CD4-positive, alpha-beta memory T cell (primary cell): ENCODE measurements at regions of chr1 and their contacts with region 1.

Region 1: GRCh38 chr1:62841587-62842169 is 57.7 kb downstream of the ATG4C start:
- DNase-seq: peak in 4 of 5 donors; percentile 32 to 48 (median 44)
- H3K4me3 ChIP-seq: no peak overlapping the region
- H3K4me3 Mint-ChIP-seq: no peak overlapping the region
- H3K27ac ChIP-seq: no peak overlapping the region
- H3K27ac Mint-ChIP-seq: no peak overlapping the region
- H3K4me1 ChIP-seq: no peaks in the 10 kb centered on the region
- H3K4me1 Mint-ChIP-seq: peaks cover 0 to 1% (median 0%) of the 10 kb centered on the region in 4 donors
- H3K27me3 ChIP-seq: no peaks in the 10 kb centered on the region
- H3K27me3 Mint-ChIP-seq: no peaks in the 10 kb centered on the region

Region 2: DNA sequence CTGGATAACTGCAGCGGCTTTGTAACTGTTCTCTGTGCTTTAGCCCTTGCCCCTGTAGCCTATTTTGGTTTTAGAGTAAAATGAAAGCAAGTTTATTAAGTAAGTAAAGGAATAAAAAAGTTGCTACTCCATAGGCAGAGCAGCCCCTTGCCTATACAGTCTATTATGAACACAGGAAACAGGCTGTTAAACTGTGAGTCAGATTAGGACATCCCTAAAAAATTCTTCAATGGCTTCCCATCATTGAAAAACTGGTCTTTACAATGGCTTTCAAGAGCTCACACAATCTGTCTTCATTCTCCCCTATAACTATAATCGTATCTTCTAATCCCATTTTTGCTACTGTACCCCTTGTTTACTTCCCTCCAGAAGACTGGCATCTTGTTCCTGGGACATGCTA is 14.8 kb before region 1 on chr1:
- CTCF ChIA-PET with region 1: interaction called, 22 read pairs
- POLR2A ChIA-PET with region 1: no interaction called
- intact Hi-C with region 1: no loop called
- DNase-seq: no peak
- H3K4me3 ChIP-seq: no peak overlapping the region
- H3K4me3 Mint-ChIP-seq: no peak overlapping the region
- H3K27ac ChIP-seq: no peak overlapping the region
- H3K27ac Mint-ChIP-seq: no peak overlapping the region
- H3K4me1 ChIP-seq: no peaks in the 10 kb centered on the region
- H3K4me1 Mint-ChIP-seq: peaks cover 0 to 8% (median 5%) of the 10 kb centered on the region in 4 donors
- H3K27me3 ChIP-seq: no peaks in the 10 kb centered on the region
- H3K27me3 Mint-ChIP-seq: no peaks in the 10 kb centered on the region

Region 3: DNA sequence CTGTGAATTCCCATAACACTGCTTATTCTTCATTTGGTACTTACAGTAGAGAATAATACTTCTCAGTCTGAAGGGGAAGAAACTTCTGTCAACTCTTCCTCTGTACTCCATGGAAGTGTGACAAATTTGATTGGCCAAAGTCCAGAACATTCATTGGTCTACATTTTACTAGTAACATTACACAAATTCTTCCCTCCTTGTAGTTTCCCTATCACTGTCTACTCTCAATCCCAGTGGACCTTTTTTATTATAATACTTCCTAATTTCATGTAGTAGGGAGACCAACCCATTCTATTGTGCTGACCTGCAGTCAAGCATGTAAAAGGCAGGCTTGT is 600.4 kb after region 1 on chr1:
- CTCF ChIA-PET with region 1: interaction called, 12 read pairs
- POLR2A ChIA-PET with region 1: no interaction called
- intact Hi-C with region 1: no loop called
- DNase-seq: no peak
- H3K4me3 ChIP-seq: no peak overlapping the region
- H3K4me3 Mint-ChIP-seq: no peak overlapping the region
- H3K27ac ChIP-seq: no peak overlapping the region
- H3K27ac Mint-ChIP-seq: no peak overlapping the region
- H3K4me1 ChIP-seq: no peaks in the 10 kb centered on the region
- H3K4me1 Mint-ChIP-seq: no peaks in the 10 kb centered on the region
- H3K27me3 ChIP-seq: no peaks in the 10 kb centered on the region
- H3K27me3 Mint-ChIP-seq: no peaks in the 10 kb centered on the region

Region 4: DNA sequence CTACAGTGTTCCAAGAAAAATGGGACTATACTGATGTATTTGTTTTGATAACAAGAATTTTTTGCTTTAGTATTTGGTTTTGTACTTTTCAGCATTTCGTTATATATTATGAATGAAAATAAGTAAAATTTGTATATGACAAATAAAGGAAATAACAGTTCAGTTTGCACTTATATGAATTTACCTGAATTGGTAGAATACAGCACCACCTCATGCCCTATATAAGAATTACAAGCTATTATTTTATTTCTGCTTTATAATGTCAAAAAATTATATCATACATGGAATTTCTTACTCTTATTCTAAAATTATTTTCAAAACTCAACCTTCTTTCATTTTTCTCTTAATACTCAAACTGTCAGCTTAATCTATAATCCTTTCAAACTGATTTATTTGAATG is 696.3 kb after region 1 on chr1:
- CTCF ChIA-PET with region 1: interaction called, 30 read pairs
- POLR2A ChIA-PET with region 1: no interaction called
- intact Hi-C with region 1: no loop called
- DNase-seq: peak in 2 of 5 donors; percentile 7 to 13
- H3K4me3 ChIP-seq: no peak overlapping the region
- H3K4me3 Mint-ChIP-seq: no peak overlapping the region
- H3K27ac ChIP-seq: no peak overlapping the region
- H3K27ac Mint-ChIP-seq: no peak overlapping the region
- H3K4me1 ChIP-seq: no peaks in the 10 kb centered on the region
- H3K4me1 Mint-ChIP-seq: peaks cover 0 to 2% (median 0%) of the 10 kb centered on the region in 4 donors
- H3K27me3 ChIP-seq: no peaks in the 10 kb centered on the region
- H3K27me3 Mint-ChIP-seq: no peaks in the 10 kb centered on the region